PC-9 (cell line): ENCODE measurements at regions of chr3 and their contacts with region 1.

Region 1: DNA sequence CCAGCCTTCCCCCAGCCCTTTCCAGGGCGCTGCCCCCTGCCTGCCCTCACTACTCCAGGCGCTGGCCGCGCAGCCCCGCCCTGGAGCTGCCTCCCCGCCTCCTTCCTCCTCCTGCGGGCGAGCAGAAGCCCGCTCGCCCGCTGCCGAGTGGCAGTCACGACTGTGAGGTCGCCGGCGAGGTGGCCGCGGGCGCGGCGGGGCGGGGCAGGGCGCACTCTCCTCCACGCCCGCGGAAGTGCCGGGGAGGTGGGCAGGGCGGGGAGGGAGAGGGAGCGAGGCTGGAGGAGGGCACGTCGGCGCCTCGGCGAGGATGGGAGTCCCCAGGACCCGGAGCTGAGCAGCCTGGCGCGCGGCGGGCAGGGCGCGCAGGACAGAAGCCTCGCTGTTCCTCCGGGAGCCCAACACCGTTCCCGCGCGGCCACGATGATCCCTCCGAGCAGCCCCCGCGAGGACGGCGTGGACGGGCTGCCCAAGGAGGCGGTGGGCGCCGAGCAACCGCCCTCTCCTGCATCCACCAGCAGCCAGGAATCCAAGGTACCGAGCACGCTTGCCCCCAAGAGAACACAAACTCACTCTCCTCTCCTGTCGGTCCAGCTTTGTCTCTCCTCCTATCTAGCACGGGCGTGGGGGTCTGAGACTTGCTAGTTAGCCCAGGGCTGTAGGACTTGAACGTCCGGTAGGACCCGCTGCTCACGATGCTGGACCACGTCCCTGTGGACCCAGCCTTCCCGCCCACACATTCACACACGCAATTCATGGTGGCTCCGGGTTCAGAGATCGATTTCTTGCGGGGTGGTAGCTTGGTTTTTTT is at the start of gene STAC:
- DNase-seq: peak; percentile 60 to 85
- H3K4me3 ChIP-seq: peak within 1 kb of the TSS; percentile 96
- H3K27ac ChIP-seq: no peak within 1 kb of the TSS
- H3K4me1 ChIP-seq: peaks cover 23% of the 10 kb centered on the region
- H3K27me3 ChIP-seq: no peaks in the 10 kb centered on the region
- CTCF ChIP-seq: no peak
- total RNA-seq, gene STAC: 14.7 and 17.6 TPM in 2 replicates

Region 2: GRCh38 chr3:36124118-36124796 is 256.2 kb before region 1 on chr3:
- CTCF ChIA-PET with region 1: no interaction called
- POLR2A ChIA-PET with region 1: no interaction called
- intact Hi-C with region 1: loop called (anchors 2 kb)
- DNase-seq: peak; percentile 40 to 58
- H3K4me3 ChIP-seq: no peak overlapping the region
- H3K27ac ChIP-seq: no peak overlapping the region
- H3K4me1 ChIP-seq: no peaks in the 10 kb centered on the region
- H3K27me3 ChIP-seq: no peaks in the 10 kb centered on the region
- CTCF ChIP-seq: peak; percentile 80

Region 3: DNA sequence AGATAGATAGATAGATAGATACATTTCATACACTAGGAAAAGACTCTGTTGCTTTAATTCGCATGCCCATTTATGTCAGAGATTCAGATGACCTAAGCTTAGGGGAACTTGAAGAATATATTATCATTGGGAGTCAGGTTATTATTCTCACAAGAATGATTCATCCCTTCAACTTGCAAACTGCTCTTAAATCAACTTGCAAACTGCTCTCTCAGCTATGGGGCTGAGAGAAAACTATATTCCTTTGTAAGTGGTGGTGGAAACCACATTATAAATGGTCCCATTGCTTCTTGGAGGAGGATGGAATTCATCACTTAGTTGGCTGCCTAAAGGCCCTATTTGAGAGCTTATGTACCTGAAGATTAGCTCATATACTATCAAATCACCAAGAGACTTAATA is 161.0 kb before region 1 on chr3:
- CTCF ChIA-PET with region 1: no interaction called
- POLR2A ChIA-PET with region 1: interaction called, 11 read pairs
- intact Hi-C with region 1: no loop called
- DNase-seq: no peak
- H3K4me3 ChIP-seq: no peak overlapping the region
- H3K27ac ChIP-seq: no peak overlapping the region
- H3K4me1 ChIP-seq: no peaks in the 10 kb centered on the region
- H3K27me3 ChIP-seq: no peaks in the 10 kb centered on the region
- CTCF ChIP-seq: no peak

Region 4: GRCh38 chr3:36540888-36541518 is 160.6 kb after region 1 on chr3:
- CTCF ChIA-PET with region 1: interaction called, 3 read pairs
- POLR2A ChIA-PET with region 1: no interaction called
- intact Hi-C with region 1: loop called (anchors 5 kb)
- DNase-seq: peak in 1 of 2 experiments; percentile 20
- H3K4me3 ChIP-seq: no peak overlapping the region
- H3K27ac ChIP-seq: no peak overlapping the region
- H3K4me1 ChIP-seq: no peaks in the 10 kb centered on the region
- H3K27me3 ChIP-seq: no peaks in the 10 kb centered on the region
- CTCF ChIP-seq: peak; percentile 86

Region 5: DNA sequence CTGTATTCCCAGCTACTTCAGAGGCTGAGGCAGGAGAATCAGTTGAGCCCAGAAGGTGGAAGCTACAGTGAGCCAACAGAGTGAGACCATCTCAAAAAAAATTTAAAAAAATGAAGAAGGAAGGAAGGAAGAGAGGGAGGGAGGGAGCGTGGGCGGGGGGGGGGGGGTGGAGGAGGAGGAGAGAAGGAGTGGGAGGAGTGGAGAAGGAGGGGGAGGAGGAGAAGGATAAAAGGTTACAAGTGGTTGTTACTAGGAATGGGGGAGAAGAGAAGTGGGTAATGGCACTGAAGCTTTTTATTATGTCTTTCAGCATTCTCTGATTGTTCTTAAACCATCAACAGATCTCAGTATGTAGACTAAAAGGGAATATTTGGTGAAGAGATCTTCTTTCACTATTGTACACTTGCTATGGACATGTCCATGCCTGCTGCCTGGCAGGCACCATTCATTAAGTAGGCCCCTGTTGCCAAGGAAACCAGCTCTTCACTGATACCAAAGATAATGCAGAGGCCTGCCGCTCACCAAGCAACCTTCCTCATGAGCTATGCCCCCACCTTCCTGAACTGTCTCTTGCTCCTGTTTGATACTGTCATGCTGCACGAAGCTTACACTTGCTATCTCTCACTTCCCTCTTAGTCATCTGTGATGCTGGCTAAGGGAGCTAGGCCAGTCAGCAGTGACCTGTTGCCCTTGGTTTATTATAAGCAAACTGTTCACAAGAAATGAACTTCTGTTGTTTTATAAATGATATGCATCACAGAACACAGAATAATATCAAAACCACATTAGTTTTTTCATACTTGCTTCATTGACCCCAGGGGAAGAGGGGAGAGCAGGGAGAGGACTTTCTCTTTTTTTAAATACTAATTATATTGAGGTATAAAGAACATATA is 589.4 kb after region 1 on chr3:
- CTCF ChIA-PET with region 1: no interaction called
- POLR2A ChIA-PET with region 1: interaction called, 14 read pairs
- intact Hi-C with region 1: no loop called
- DNase-seq: peak in 1 of 2 experiments; percentile 5
- H3K4me3 ChIP-seq: no peak overlapping the region
- H3K27ac ChIP-seq: no peak overlapping the region
- H3K4me1 ChIP-seq: peaks cover 8% of the 10 kb centered on the region; the same call in 1 of the 2 replicates
- H3K27me3 ChIP-seq: no peaks in the 10 kb centered on the region
- CTCF ChIP-seq: no peak